ENCODE measurements at regions of chr2 and their contacts with region 1.

Region 1: GRCh38 chr2:66839551-66840320 is 404.8 kb downstream of the MEIS1 start:
- DNase-seq: peak; percentile 98
- H3K4me3 ChIP-seq: no peak overlapping the region
- H3K27ac ChIP-seq: peak overlapping the region; percentile 95
- H3K27me3 ChIP-seq: no peaks in the 10 kb centered on the region
- CTCF ChIP-seq: no peak

Region 2: DNA sequence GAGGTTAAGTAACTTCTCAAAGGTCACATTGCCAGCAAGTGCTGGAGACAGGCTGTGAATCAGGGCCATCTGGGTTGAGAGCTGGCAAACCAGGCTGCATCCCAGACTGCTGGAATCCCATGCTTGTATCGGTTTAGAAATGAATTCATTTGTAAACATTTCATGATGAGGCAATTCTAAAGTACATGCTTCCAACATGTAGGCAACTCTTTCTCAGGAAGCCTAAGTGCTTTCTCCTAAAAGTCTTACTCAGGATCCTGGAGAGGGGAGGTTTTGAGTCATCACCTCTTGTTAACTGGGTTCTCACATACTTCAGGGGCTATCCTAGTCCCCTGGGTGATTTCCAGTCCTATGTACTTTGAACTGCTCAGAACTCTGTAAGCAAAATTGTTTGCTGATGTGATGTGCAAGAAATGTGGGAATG is 11.7 kb after region 1 on chr2:
- CTCF ChIA-PET with region 1: no interaction called
- POLR2A ChIA-PET with region 1: no interaction called
- DNase-seq: peak; percentile 92
- H3K4me3 ChIP-seq: no peak overlapping the region
- H3K27ac ChIP-seq: peak overlapping the region; percentile 80
- H3K27me3 ChIP-seq: no peaks in the 10 kb centered on the region
- CTCF ChIP-seq: no peak

Region 3: DNA sequence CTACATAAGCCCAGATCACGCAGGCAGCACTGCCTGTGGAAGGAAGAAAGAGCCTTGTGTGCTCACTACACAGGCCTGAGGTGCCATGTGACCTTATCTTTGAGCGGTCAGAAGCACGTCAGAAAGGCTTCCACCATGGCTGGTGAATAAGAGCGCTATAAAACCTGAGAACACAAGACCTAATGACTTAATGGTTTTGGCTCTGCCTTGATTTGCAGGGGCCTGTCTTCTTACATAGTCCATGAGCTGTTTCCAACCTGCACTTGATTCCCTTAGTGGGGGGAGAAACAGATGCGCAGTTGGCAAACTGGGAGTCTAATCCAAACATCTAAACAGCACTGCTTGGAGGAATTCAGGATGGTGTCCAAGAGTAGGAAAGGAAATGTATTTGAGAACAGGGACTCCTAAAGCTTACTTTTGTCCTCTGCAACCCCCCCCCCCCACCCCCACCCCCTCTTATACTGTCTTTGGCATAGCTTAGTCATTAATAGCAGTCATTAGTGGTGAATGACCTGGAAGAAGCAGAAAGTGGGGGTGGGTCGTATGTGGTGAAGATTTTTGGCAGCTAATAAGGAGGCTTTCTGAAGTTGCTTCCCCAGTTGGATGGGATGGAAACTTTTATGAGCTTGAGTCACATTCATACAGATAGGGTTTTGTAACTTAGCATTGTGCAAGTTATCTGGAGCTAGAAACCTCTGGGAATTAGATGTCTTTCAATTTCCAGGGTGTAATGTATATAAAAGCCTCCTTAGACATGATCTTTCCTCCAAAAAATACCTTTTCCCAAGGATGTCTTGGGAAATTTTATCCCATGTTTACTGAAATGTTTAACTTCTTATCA is 49.3 kb after region 1 on chr2:
- CTCF ChIA-PET with region 1: no interaction called
- POLR2A ChIA-PET with region 1: interaction called, 10 read pairs
- DNase-seq: peak; percentile 97
- H3K4me3 ChIP-seq: no peak overlapping the region
- H3K27ac ChIP-seq: peak overlapping the region; percentile 98
- H3K27me3 ChIP-seq: no peaks in the 10 kb centered on the region
- CTCF ChIP-seq: no peak

Region 4: GRCh38 chr2:67215214-67216055 is 375.7 kb after region 1 on chr2:
- CTCF ChIA-PET with region 1: interaction called, 11 read pairs
- POLR2A ChIA-PET with region 1: no interaction called
- DNase-seq: peak; percentile 77
- H3K4me3 ChIP-seq: no peak overlapping the region
- H3K27ac ChIP-seq: peak overlapping the region; percentile 82
- H3K27me3 ChIP-seq: no peaks in the 10 kb centered on the region
- CTCF ChIP-seq: peak; percentile 91

Measured in AG04450 (cell line).